PC-3 (cell line): ENCODE measurements at regions of chr3 and their contacts with region 1.

Region 1: GRCh38 chr3:99747915-99748314 is 69.7 kb upstream of the CMSS1 start:
- DNase-seq: peak; percentile 81
- ATAC-seq: peak; percentile 94
- H3K4me3 ChIP-seq: no peak overlapping the region
- H3K27ac ChIP-seq: no peak overlapping the region
- H3K4me1 ChIP-seq: peaks cover 23% of the 10 kb centered on the region
- H3K27me3 ChIP-seq: no peaks in the 10 kb centered on the region
- CTCF ChIP-seq: peak; percentile 90

Region 2: DNA sequence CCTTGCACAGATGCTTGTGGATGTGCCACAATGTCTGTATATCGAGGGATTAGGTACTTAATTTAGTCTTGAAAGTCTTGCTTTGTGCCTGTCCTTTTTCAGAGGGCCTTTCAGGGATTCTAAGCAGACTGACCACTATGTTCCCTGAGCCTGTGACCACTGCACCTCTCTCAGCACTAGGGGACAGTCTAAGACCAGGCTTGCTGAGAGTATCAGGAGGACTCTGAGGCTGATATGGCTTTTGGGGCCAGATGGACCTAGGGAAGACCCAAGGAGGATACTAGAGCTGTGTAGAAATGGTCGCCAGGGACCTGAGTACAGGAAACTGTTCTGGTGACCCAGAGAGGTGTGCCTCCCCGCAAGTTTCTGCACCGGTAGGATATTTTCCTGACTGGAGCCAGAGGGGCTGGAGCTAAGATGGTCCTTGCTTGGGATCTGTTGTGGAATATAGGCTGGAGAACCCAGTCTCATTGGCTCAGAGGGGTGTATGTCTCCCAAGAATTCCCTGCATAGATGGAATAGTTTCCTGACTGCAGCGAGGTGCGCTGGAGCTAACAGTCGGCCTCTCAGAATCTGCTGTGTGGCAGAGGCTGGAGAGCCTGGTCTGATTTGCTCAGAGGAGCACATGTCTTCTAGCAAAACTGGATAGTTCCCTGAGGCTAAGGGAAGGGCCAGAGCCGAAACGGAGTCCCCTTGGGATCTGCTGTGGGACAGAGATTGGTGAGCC is 633.2 kb before region 1 on chr3:
- CTCF ChIA-PET with region 1: no interaction called
- POLR2A ChIA-PET with region 1: no interaction called
- intact Hi-C with region 1: loop called (anchors 1 kb)
- DNase-seq: peak; percentile 72
- ATAC-seq: peak; percentile 90
- H3K4me3 ChIP-seq: no peak overlapping the region
- H3K27ac ChIP-seq: no peak overlapping the region
- H3K4me1 ChIP-seq: peaks cover 6% of the 10 kb centered on the region; the same call in 1 of the 2 replicates
- H3K27me3 ChIP-seq: no peaks in the 10 kb centered on the region
- CTCF ChIP-seq: peak; percentile 94

Region 3: DNA sequence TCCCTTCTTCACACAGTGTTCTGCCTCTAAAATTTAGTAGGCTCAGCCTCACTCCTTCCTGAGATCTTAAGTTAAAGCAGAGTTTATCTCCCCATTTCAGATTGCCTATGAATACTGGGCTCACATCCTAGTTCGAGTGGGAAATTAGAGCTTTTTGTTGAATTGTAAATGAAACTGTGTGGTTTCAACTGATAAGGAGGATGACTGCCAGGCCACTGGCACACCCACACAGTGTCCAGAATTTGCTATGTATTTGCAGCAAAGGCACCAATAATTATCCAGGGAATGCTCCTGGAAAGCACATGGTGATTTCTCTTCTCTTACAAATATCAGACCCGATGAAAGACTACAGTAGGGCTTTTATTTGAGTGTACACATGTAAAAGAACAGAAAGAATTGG is 417.6 kb before region 1 on chr3:
- CTCF ChIA-PET with region 1: no interaction called
- POLR2A ChIA-PET with region 1: no interaction called
- intact Hi-C with region 1: loop called (anchors 5 kb)
- DNase-seq: peak; percentile 31
- ATAC-seq: peak; percentile 23
- H3K4me3 ChIP-seq: no peak overlapping the region
- H3K27ac ChIP-seq: no peak overlapping the region
- H3K4me1 ChIP-seq: peaks cover 22% of the 10 kb centered on the region
- H3K27me3 ChIP-seq: no peaks in the 10 kb centered on the region
- CTCF ChIP-seq: no peak

Region 4: GRCh38 chr3:99400352-99400751 is 347.6 kb before region 1 on chr3:
- CTCF ChIA-PET with region 1: no interaction called
- POLR2A ChIA-PET with region 1: no interaction called
- intact Hi-C with region 1: loop called (anchors 5 kb)
- DNase-seq: no peak
- ATAC-seq: no peak
- H3K4me3 ChIP-seq: no peak overlapping the region
- H3K27ac ChIP-seq: no peak overlapping the region
- H3K4me1 ChIP-seq: peaks cover 6% of the 10 kb centered on the region; the same call in 1 of the 2 replicates
- H3K27me3 ChIP-seq: no peaks in the 10 kb centered on the region
- CTCF ChIP-seq: no peak

Region 5: DNA sequence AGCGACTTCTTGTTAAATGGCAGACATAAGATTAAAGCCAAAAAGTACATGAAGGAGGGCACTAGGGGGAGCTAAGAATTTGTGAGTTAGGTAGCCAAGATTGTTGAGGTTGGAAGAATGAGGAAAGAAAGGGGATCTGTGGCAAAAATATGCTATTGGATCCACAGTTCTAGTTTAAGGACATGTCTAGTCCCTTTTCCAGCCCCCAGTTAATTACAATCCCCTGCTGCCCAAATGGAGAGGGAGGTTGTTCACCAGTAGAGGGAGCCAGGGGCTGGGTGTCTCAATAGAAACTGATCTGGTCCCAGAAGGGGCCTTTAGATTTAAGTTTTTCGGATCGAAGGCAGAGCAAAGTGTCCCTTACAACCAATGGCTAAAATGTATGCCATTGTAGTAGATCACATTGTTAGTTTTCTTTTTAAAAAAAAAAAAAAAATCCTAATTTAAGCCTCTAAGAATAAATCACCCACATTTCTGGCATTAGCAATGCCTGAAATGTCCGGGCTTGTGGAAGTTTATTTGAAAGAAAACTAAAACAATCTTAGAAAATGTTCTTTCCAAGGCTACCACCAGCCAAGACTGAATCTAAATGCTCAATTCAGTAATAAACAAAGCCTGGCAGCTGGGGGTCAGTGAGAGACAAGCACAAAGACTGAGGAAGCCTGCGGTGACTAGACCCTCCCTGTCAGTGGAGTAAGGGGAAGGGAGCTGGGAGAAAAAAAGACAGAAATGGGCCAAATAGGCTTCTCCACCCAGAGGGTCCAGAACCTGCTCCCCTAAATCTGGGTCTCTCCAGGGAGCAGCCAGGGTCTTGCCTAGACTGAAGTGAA is 102.4 kb before region 1 on chr3:
- CTCF ChIA-PET with region 1: interaction called, 5 read pairs
- POLR2A ChIA-PET with region 1: no interaction called
- intact Hi-C with region 1: loop called (anchors 1 kb)
- DNase-seq: peak; percentile 58
- ATAC-seq: no peak
- H3K4me3 ChIP-seq: no peak overlapping the region
- H3K27ac ChIP-seq: no peak overlapping the region
- H3K4me1 ChIP-seq: peaks cover 30% of the 10 kb centered on the region
- H3K27me3 ChIP-seq: no peaks in the 10 kb centered on the region
- CTCF ChIP-seq: peak; percentile 99

Region 6: GRCh38 chr3:99699841-99700240 is 48.1 kb before region 1 on chr3:
- CTCF ChIA-PET with region 1: no interaction called
- POLR2A ChIA-PET with region 1: interaction called, 3 read pairs
- intact Hi-C with region 1: loop called (anchors 2 kb)
- DNase-seq: no peak
- ATAC-seq: no peak
- H3K4me3 ChIP-seq: no peak overlapping the region
- H3K27ac ChIP-seq: no peak overlapping the region
- H3K4me1 ChIP-seq: peaks cover 5% of the 10 kb centered on the region; the same call in 1 of the 2 replicates
- H3K27me3 ChIP-seq: no peaks in the 10 kb centered on the region
- CTCF ChIP-seq: no peak

Region 7: GRCh38 chr3:100234364-100234763 is 486.4 kb after region 1 on chr3:
- CTCF ChIA-PET with region 1: no interaction called
- POLR2A ChIA-PET with region 1: no interaction called
- intact Hi-C with region 1: no loop called
- DNase-seq: no peak
- ATAC-seq: no peak
- H3K4me3 ChIP-seq: no peak overlapping the region
- H3K27ac ChIP-seq: no peak overlapping the region
- H3K4me1 ChIP-seq: peaks cover 16% of the 10 kb centered on the region
- H3K27me3 ChIP-seq: no peaks in the 10 kb centered on the region
- CTCF ChIP-seq: no peak